ENCODE measurements at regions of chr2 and their contacts with region 1.

Region 1: DNA sequence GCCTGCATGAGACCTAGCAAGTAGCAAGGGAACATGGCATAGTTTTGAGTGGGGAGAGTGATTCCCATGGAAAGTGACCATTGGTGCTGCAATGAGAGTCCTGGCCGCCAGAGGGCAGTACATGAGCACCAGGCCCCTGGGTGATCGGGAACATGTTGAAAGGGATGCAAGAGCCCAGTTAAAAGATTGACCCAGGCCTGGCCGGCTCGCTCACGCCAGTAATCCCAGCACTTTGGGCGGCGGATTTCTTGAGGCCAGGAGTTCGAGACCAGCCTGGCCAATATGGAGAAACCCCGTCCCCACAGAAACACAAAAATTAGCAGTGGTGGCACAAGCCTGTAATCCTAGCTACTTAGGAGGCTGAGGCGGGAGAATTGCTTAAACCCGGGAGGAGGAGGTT is 22.2 kb downstream of the FAP start:
- DNase-seq: peak; percentile 24
- H3K4me3 Mint-ChIP-seq: no peak overlapping the region
- H3K27ac Mint-ChIP-seq: no peak overlapping the region
- H3K4me1 Mint-ChIP-seq: no peaks in the 10 kb centered on the region
- H3K27me3 Mint-ChIP-seq: peaks cover 34% of the 10 kb centered on the region

Region 2: GRCh38 chr2:161418715-161419637 is 802.1 kb before region 1 on chr2:
- intact Hi-C with region 1: no loop called
- DNase-seq: no peak
- H3K4me3 Mint-ChIP-seq: peak overlapping the region; percentile 58
- H3K27ac Mint-ChIP-seq: peak overlapping the region; percentile 72
- H3K4me1 Mint-ChIP-seq: peaks cover 54% of the 10 kb centered on the region
- H3K27me3 Mint-ChIP-seq: peaks cover 83% of the 10 kb centered on the region

Region 3: DNA sequence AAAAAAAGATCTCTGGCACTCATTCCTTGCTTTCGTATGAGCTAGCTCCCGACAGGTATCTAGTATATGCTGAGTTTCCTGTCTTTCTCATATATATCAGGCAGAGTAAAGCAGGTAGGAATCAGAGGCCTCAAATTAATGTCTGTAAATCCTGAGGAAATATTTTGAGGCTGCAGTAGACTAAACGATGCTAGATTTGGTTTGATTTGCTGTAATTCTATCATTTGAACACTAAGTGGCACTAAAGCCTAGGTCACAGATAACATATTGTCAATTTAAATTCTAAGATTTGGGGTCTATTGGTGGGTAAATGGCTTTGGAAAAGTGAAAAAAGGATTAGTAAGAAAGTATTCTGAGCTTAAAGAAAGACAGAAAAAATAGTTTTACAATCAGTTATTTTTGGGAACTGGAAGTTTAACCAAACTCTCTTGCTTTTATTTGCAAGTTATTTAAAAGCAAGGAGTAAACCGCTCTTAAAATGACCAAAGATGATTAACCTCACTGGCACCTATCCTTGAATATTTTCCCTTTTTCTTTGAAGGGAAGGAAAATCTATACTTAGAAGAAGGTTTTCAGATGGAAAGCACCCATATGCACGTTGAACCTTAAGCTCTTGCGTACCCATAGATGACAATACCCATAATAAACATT is 634.4 kb before region 1 on chr2:
- intact Hi-C with region 1: loop called (anchors 5 kb)
- DNase-seq: no peak
- H3K4me3 Mint-ChIP-seq: no peak overlapping the region
- H3K27ac Mint-ChIP-seq: no peak overlapping the region
- H3K4me1 Mint-ChIP-seq: peaks cover 4% of the 10 kb centered on the region
- H3K27me3 Mint-ChIP-seq: peaks cover 26% of the 10 kb centered on the region

Region 4: GRCh38 chr2:162382278-162382677 is 161.2 kb after region 1 on chr2:
- intact Hi-C with region 1: no loop called
- DNase-seq: no peak
- H3K4me3 Mint-ChIP-seq: no peak overlapping the region
- H3K27ac Mint-ChIP-seq: no peak overlapping the region
- H3K4me1 Mint-ChIP-seq: no peaks in the 10 kb centered on the region
- H3K27me3 Mint-ChIP-seq: peaks cover 7% of the 10 kb centered on the region

Measured in activated T-helper 1 cell treated with anti-CD3 and anti-CD28 coated beads, Interleukin-12 subunit alpha, Interleukin-12 subunit beta, Interleukin-2, Interleukin-4 antibody, amounts not matched to agents 30 ng/mL and 10 ng/mL and 1 ng/mL, durations not matched to agents 14 hours and 24 hours and 36 hours (primary cell).